B cell (primary cell): ENCODE measurements at regions of chr10 and their contacts with region 1.

Region 1: GRCh38 chr10:80599424-80599847 is 61.7 kb downstream of the SH2D4B start:
- DNase-seq: peak; percentile 55
- ATAC-seq: peak; percentile 58
- H3K4me3 ChIP-seq: no peak overlapping the region
- H3K4me3 Mint-ChIP-seq: no peak overlapping the region
- H3K27ac ChIP-seq: no peak overlapping the region
- H3K27ac Mint-ChIP-seq: no peak overlapping the region
- H3K4me1 ChIP-seq: peaks cover 13 to 28% of the 10 kb centered on the region in 2 donors
- H3K4me1 Mint-ChIP-seq: peaks cover 22% of the 10 kb centered on the region
- H3K27me3 ChIP-seq: no peaks in the 10 kb centered on the region
- H3K27me3 Mint-ChIP-seq: no peaks in the 10 kb centered on the region
- CTCF ChIP-seq: peak; percentile 51

Region 2: DNA sequence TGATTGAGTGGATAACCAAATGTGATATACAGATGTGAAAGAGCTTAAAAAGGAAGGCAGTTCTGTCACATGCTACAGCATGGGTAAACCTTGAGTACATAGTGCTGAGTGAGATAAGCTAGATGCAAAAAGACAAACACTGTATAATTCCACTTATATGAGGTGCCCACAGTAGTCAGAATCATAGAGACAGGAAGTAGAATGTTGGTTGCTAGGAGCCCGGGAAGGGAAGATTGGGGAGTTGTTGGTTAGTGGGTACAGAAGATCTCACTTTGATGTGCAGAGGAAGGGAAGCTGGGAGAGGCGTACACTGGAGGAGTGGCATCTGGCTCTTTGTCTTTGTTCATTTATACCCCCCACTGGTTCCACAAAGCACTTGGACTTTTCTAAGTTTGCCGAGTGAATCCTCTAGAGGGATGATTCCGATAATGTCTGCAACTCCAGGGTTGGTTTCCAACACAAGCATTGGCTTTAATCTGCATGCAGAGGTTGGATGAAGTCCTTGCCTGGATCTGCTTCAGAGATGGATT is 105.8 kb before region 1 on chr10:
- CTCF ChIA-PET with region 1: no interaction called
- POLR2A ChIA-PET with region 1: no interaction called
- intact Hi-C with region 1: no loop called
- DNase-seq: no peak
- ATAC-seq: peak; percentile 10
- H3K4me3 ChIP-seq: no peak overlapping the region
- H3K4me3 Mint-ChIP-seq: no peak overlapping the region
- H3K27ac ChIP-seq: no peak overlapping the region
- H3K27ac Mint-ChIP-seq: no peak overlapping the region
- H3K4me1 ChIP-seq: peaks cover 18 to 34% of the 10 kb centered on the region in 2 donors
- H3K4me1 Mint-ChIP-seq: peaks cover 56% of the 10 kb centered on the region
- H3K27me3 ChIP-seq: no peaks in the 10 kb centered on the region
- H3K27me3 Mint-ChIP-seq: no peaks in the 10 kb centered on the region
- CTCF ChIP-seq: no peak

Region 3: GRCh38 chr10:80535671-80536365 is 63.6 kb before region 1 on chr10:
- CTCF ChIA-PET with region 1: interaction called, 3 read pairs
- POLR2A ChIA-PET with region 1: no interaction called
- intact Hi-C with region 1: loop called (anchors 5 kb)
- DNase-seq: peak; percentile 84
- ATAC-seq: peak; percentile 87
- H3K4me3 ChIP-seq: peak overlapping the region; percentile 57 to 75 (median 63)
- H3K4me3 Mint-ChIP-seq: peak overlapping the region; percentile 90
- H3K27ac ChIP-seq: peak overlapping the region; percentile 76 to 79
- H3K27ac Mint-ChIP-seq: peak overlapping the region; percentile 94
- H3K4me1 ChIP-seq: peaks cover 19 to 38% of the 10 kb centered on the region in 2 donors
- H3K4me1 Mint-ChIP-seq: peaks cover 35% of the 10 kb centered on the region
- H3K27me3 ChIP-seq: no peaks in the 10 kb centered on the region
- H3K27me3 Mint-ChIP-seq: peaks cover 4% of the 10 kb centered on the region
- CTCF ChIP-seq: peak; percentile 87

Region 4: GRCh38 chr10:80561950-80562349 is 37.5 kb before region 1 on chr10:
- CTCF ChIA-PET with region 1: interaction called, 3 read pairs
- POLR2A ChIA-PET with region 1: no interaction called
- intact Hi-C with region 1: loop called (anchors 5 kb)
- DNase-seq: no peak
- ATAC-seq: no peak
- H3K4me3 ChIP-seq: no peak overlapping the region
- H3K4me3 Mint-ChIP-seq: no peak overlapping the region
- H3K27ac ChIP-seq: no peak overlapping the region
- H3K27ac Mint-ChIP-seq: no peak overlapping the region
- H3K4me1 ChIP-seq: no peaks in the 10 kb centered on the region
- H3K4me1 Mint-ChIP-seq: no peaks in the 10 kb centered on the region
- H3K27me3 ChIP-seq: peaks cover 0 to 3% (median 0%) of the 10 kb centered on the region in 4 experiments
- H3K27me3 Mint-ChIP-seq: no peaks in the 10 kb centered on the region
- CTCF ChIP-seq: no peak

Region 5: GRCh38 chr10:80619036-80619435 is 19.6 kb after region 1 on chr10:
- CTCF ChIA-PET with region 1: no interaction called
- POLR2A ChIA-PET with region 1: no interaction called
- intact Hi-C with region 1: no loop called
- DNase-seq: no peak
- ATAC-seq: no peak
- H3K4me3 ChIP-seq: no peak overlapping the region
- H3K4me3 Mint-ChIP-seq: no peak overlapping the region
- H3K27ac ChIP-seq: no peak overlapping the region
- H3K27ac Mint-ChIP-seq: no peak overlapping the region
- H3K4me1 ChIP-seq: no peaks in the 10 kb centered on the region
- H3K4me1 Mint-ChIP-seq: no peaks in the 10 kb centered on the region
- H3K27me3 ChIP-seq: no peaks in the 10 kb centered on the region
- H3K27me3 Mint-ChIP-seq: peaks cover 4% of the 10 kb centered on the region
- CTCF ChIP-seq: no peak